Common myeloid progenitor, CD34-positive (primary cell): ENCODE measurements at regions of chr13 and their contacts with region 1.

Region 1: GRCh38 chr13:75694722-75695121 is 58.6 kb downstream of the LMO7 start:
- DNase-seq: no peak
- H3K4me3 ChIP-seq: no peak overlapping the region
- H3K27ac ChIP-seq: no peak overlapping the region
- H3K4me1 ChIP-seq: peaks cover 0 to 3% (median 0%) of the 10 kb centered on the region in 4 experiments
- H3K27me3 ChIP-seq: no peaks in the 10 kb centered on the region

Region 2: GRCh38 chr13:75635828-75636435 is 58.8 kb before region 1 on chr13 and contains the start of gene LMO7:
- CTCF ChIA-PET with region 1: no interaction called
- POLR2A ChIA-PET with region 1: no interaction called
- DNase-seq: peak; percentile 42 to 82 (median 63)
- H3K4me3 ChIP-seq: peak within 1 kb of the TSS; percentile 40 to 83 (median 74)
- H3K27ac ChIP-seq: no peak within 1 kb of the TSS
- H3K4me1 ChIP-seq: peaks cover 5 to 23% (median 14%) of the 10 kb centered on the region in 4 experiments
- H3K27me3 ChIP-seq: peaks cover 3 to 13% (median 10%) of the 10 kb centered on the region in 5 experiments

Region 3: GRCh38 chr13:75675421-75675820 is 19.3 kb before region 1 on chr13:
- CTCF ChIA-PET with region 1: interaction called, 19 read pairs
- POLR2A ChIA-PET with region 1: no interaction called
- DNase-seq: no peak
- H3K4me3 ChIP-seq: no peak overlapping the region
- H3K27ac ChIP-seq: no peak overlapping the region
- H3K4me1 ChIP-seq: no peaks in the 10 kb centered on the region
- H3K27me3 ChIP-seq: no peaks in the 10 kb centered on the region

Region 4: GRCh38 chr13:75715601-75716523 is 21.1 kb after region 1 on chr13:
- CTCF ChIA-PET with region 1: interaction called, 10 read pairs
- POLR2A ChIA-PET with region 1: no interaction called
- DNase-seq: peak; percentile 16 to 75 (median 66)
- H3K4me3 ChIP-seq: peak overlapping the region in 2 of 7 experiments; percentile 2 to 20
- H3K27ac ChIP-seq: no peak overlapping the region
- H3K4me1 ChIP-seq: peaks cover 4 to 9% (median 6%) of the 10 kb centered on the region in 4 experiments
- H3K27me3 ChIP-seq: no peaks in the 10 kb centered on the region

Region 5: GRCh38 chr13:75870397-75870903 is 175.7 kb after region 1 on chr13:
- CTCF ChIA-PET with region 1: interaction called, 18 read pairs
- POLR2A ChIA-PET with region 1: no interaction called
- DNase-seq: peak; percentile 24 to 52 (median 47)
- H3K4me3 ChIP-seq: peak overlapping the region in 5 of 7 experiments; percentile 9 to 69 (median 44)
- H3K27ac ChIP-seq: no peak overlapping the region
- H3K4me1 ChIP-seq: peaks cover 0 to 8% (median 2%) of the 10 kb centered on the region in 4 experiments
- H3K27me3 ChIP-seq: no peaks in the 10 kb centered on the region

Region 6: GRCh38 chr13:76473552-76474134 is 778.9 kb after region 1 on chr13:
- CTCF ChIA-PET with region 1: interaction called, 15 read pairs
- POLR2A ChIA-PET with region 1: no interaction called
- DNase-seq: peak; percentile 89 to 96 (median 92)
- H3K4me3 ChIP-seq: no peak overlapping the region
- H3K27ac ChIP-seq: no peak overlapping the region
- H3K4me1 ChIP-seq: no peaks in the 10 kb centered on the region
- H3K27me3 ChIP-seq: no peaks in the 10 kb centered on the region